HepG2 (cell line): ENCODE measurements at regions of chr17 and their contacts with region 1.

Region 1: DNA sequence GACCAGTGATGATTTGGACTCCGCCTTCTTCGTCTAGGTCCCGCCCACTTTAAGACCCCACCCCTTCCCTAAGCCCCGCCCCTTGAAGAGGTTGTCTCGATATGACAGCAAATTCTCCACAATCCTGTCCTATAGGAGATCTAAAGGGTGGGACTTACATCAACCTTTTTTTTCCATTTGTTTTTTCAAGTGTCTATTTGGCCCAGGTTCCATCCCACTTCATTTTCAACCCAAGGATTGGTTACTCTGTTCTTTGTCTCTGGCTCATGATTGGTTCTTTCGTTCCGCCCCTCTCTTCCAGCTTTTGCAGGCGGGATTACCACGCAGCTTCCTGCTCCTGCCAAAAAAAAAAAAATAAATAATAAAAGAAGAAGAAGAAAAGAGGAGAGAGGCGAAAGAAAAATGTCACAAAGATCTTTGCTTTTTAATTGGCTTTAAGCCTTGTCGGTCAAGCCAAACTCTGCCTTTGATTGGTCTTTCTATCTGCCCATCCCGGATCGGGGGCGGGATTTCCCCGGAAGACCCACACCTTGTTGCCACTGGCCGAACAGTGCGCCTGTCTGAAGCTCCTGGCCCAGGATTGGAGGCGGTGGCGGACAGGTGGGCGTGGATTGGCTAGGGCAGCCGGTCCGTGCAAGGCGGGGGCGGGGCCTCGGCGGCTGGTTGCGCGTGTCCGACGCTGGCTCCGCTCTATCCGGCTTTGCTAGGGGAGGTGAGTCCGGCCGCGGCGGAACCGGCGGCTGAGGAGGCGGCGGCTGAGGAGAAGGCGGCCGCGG is 1.2 kb upstream of the NLK start:
- DNase-seq: peak; percentile 99
- ATAC-seq: peak; percentile 98
- H3K4me3 ChIP-seq: peak overlapping the region; percentile 88 to 89 (median 89)
- H3K27ac ChIP-seq: peak overlapping the region; percentile 51
- H3K4me1 ChIP-seq: peaks cover 50% of the 10 kb centered on the region
- H3K27me3 ChIP-seq: no peaks in the 10 kb centered on the region
- CTCF ChIP-seq: no peak
- EP300 ChIP-seq: no peak
- POLR2A ChIP-seq: peak; percentile 40 to 79; a peak in 3 of 4 replicates
- RAD21 ChIP-seq: no peak

Region 2: GRCh38 chr17:27944546-27945332 is 96.5 kb before region 1 on chr17:
- CTCF ChIA-PET with region 1: no interaction called
- POLR2A ChIA-PET with region 1: no interaction called
- in situ Hi-C with region 1: no loop called
- intact Hi-C with region 1: no loop called
- DNase-seq: no peak
- ATAC-seq: no peak
- H3K4me3 ChIP-seq: no peak overlapping the region
- H3K27ac ChIP-seq: no peak overlapping the region
- H3K4me1 ChIP-seq: no peaks in the 10 kb centered on the region
- H3K27me3 ChIP-seq: no peaks in the 10 kb centered on the region; a peak in 2 of 5 replicates
- CTCF ChIP-seq: no peak
- EP300 ChIP-seq: no peak
- POLR2A ChIP-seq: no peak
- RAD21 ChIP-seq: no peak

Region 3: DNA sequence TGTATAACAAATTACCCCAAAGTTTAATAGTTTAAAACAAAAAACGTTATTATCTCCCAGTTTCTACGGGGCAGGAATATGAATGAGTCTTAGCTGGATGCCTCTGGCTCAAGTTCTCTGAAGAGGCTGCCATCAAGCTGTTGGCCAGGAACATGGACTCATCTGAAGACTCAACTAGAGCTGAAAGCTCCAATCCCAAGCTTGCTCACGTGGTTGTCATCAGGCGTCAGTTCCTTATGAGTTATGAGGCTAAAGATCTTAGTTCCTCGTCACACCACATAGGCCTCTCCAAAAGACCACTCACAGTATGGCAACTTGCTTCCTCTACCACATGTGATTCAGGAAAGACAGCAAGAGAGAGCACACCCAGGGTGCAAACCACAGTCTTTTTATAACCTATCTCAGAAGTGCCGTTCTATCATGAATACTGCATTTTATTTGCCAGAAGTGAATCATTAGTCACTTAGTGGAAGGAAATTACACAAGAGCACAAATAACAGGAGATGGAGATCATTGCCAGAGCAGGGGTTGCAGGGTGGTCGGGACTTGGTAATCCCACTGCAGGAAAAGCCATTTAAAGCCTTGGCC is 47.4 kb before region 1 on chr17:
- CTCF ChIA-PET with region 1: no interaction called
- POLR2A ChIA-PET with region 1: no interaction called
- in situ Hi-C with region 1: no loop called
- intact Hi-C with region 1: no loop called
- DNase-seq: no peak
- ATAC-seq: no peak
- H3K4me3 ChIP-seq: no peak overlapping the region
- H3K27ac ChIP-seq: no peak overlapping the region
- H3K4me1 ChIP-seq: no peaks in the 10 kb centered on the region
- H3K27me3 ChIP-seq: no peaks in the 10 kb centered on the region
- CTCF ChIP-seq: no peak
- EP300 ChIP-seq: no peak
- POLR2A ChIP-seq: no peak
- RAD21 ChIP-seq: no peak

Region 4: DNA sequence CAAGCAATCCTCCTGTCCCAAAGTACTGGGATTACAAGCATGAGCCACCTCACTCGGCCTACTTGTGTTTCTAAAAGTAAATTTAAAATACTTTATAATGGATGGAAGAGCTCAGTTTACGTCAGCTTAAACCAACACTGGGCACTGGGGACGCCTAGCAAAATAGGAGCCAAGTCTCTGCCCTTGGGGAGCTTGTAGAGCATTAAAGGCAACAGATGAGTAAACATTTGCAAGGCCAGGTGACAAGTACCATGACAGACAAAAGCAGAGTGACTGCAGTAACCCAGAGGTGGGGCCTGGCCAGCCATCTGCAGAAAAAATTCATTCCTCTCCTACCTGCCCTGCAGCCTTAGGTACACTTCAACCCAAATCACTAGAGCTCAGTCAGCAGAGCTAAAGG is 10.9 kb before region 1 on chr17:
- CTCF ChIA-PET with region 1: no interaction called
- POLR2A ChIA-PET with region 1: interaction called, 10 read pairs
- in situ Hi-C with region 1: no loop called
- intact Hi-C with region 1: no loop called
- DNase-seq: peak; percentile 22
- ATAC-seq: peak; percentile 75
- H3K4me3 ChIP-seq: no peak overlapping the region
- H3K27ac ChIP-seq: no peak overlapping the region
- H3K4me1 ChIP-seq: 0 out of 2 replicates have a peak, but pooled peaks cover 5% of the 10 kb centered on the region
- H3K27me3 ChIP-seq: no peaks in the 10 kb centered on the region
- CTCF ChIP-seq: no peak
- EP300 ChIP-seq: no peak
- POLR2A ChIP-seq: no peak
- RAD21 ChIP-seq: no peak

Region 5: DNA sequence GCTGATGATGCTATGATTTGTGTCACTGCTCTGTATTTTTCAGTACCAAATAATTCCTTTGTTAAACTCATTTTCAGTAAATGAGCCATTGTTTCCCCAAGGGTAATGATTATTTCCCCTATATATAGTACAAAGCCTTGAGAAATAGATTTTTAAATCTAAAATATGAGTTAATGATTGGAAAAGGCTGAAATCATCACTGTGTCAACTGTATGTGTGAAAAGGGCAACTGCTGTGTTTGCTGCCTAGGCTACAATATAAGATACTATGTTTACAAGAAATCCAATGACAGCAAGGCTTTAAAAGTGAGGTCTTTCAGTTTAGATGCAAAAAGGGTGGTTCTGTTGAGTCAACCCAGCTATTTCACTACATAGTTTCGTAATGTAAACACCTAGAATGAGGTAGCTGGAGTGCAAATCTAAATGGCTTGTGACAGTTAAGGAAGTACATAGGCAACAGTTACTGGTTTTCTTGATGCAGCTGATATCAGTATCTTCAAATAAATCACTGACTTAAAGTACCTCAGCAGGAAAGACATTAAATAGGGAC is 16.5 kb after region 1 on chr17:
- CTCF ChIA-PET with region 1: no interaction called
- POLR2A ChIA-PET with region 1: interaction called, 35 read pairs
- in situ Hi-C with region 1: no loop called
- intact Hi-C with region 1: no loop called
- DNase-seq: peak; percentile 49
- ATAC-seq: peak; percentile 59
- H3K4me3 ChIP-seq: no peak overlapping the region
- H3K27ac ChIP-seq: no peak overlapping the region
- H3K4me1 ChIP-seq: peaks cover 44% of the 10 kb centered on the region
- H3K27me3 ChIP-seq: no peaks in the 10 kb centered on the region
- CTCF ChIP-seq: no peak
- EP300 ChIP-seq: no peak
- POLR2A ChIP-seq: no peak
- RAD21 ChIP-seq: no peak

Region 6: GRCh38 chr17:28086519-28086918 is 45.3 kb after region 1 on chr17:
- CTCF ChIA-PET with region 1: no interaction called
- POLR2A ChIA-PET with region 1: no interaction called
- in situ Hi-C with region 1: no loop called
- intact Hi-C with region 1: no loop called
- DNase-seq: no peak
- ATAC-seq: no peak
- H3K4me3 ChIP-seq: no peak overlapping the region
- H3K27ac ChIP-seq: no peak overlapping the region
- H3K4me1 ChIP-seq: peaks cover 20% of the 10 kb centered on the region
- H3K27me3 ChIP-seq: no peaks in the 10 kb centered on the region
- CTCF ChIP-seq: no peak
- EP300 ChIP-seq: no peak
- POLR2A ChIP-seq: no peak
- RAD21 ChIP-seq: no peak

Region 7: GRCh38 chr17:28105501-28105900 is 64.2 kb after region 1 on chr17:
- CTCF ChIA-PET with region 1: no interaction called
- POLR2A ChIA-PET with region 1: no interaction called
- in situ Hi-C with region 1: no loop called
- intact Hi-C with region 1: no loop called
- DNase-seq: no peak
- ATAC-seq: no peak
- H3K4me3 ChIP-seq: no peak overlapping the region
- H3K27ac ChIP-seq: no peak overlapping the region
- H3K4me1 ChIP-seq: peaks cover 14% of the 10 kb centered on the region
- H3K27me3 ChIP-seq: no peaks in the 10 kb centered on the region
- CTCF ChIP-seq: no peak
- EP300 ChIP-seq: no peak
- POLR2A ChIP-seq: no peak
- RAD21 ChIP-seq: no peak

Region 8: DNA sequence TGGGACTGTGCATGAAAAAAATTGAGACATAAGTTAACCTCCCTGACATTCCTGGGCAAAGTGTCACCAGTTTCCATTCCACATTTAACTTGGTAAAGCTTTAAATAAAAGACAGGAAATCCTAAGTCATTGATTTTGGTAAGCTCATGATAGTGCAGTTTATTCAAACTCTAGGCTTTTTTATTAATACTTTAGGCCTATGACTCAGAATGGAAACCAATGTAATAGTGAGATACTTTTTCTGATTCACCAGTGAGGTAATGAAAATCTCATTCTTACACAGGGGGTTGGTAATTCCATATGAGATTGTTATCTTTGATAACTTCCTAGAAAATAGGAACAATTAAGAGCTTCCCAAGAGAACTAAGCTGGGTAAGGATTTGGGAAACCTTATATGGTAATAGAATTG is 92.3 kb after region 1 on chr17:
- CTCF ChIA-PET with region 1: no interaction called
- POLR2A ChIA-PET with region 1: no interaction called
- in situ Hi-C with region 1: loop called (anchors 25 kb)
- intact Hi-C with region 1: no loop called
- DNase-seq: no peak
- ATAC-seq: no peak
- H3K4me3 ChIP-seq: no peak overlapping the region
- H3K27ac ChIP-seq: no peak overlapping the region
- H3K4me1 ChIP-seq: no peaks in the 10 kb centered on the region
- H3K27me3 ChIP-seq: no peaks in the 10 kb centered on the region; a peak in 1 of 5 replicates
- CTCF ChIP-seq: no peak
- EP300 ChIP-seq: no peak
- POLR2A ChIP-seq: no peak
- RAD21 ChIP-seq: no peak

Region 9: DNA sequence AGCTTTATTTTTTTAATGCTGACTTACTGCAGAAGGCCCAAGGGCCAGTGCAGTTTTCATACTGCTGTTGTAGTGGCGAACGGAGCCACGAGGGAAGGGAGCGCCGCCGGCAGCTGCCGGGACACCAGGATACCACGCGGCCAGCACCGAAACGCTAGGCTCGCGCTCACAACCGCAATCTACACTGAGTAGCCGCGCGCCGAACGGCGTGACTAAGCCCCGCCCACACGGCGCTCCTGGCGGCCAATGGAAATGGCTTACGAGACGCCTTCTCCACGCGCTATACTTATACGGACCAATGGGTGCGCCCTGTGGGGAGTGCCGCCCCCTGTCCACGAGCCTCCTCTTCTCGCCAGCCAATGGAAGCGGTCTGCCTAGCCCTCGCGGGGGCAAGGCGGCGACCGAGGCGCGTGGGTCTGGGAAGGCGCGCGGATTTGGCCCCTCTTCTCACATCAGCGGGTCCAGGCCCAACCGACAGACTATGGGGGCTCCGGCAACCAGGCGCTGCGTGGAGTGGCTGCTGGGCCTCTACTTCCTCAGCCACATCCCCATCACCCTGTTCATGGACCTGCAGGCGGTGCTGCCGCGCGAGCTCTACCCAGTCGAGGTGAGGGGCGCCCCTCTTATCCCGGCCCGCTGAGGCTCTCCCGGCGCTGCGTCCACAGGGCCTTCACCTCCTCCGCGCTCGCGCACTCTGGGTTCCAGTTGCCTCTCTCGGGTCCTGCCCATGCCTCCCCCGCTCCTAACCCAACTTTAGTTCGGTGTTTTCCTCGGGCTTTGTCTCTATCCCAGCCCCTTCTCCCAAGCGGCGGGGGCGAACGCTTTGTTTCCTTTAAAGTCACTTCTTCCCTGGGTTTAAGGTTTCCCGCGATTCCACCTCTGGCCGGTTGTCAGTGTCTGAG is 277.8 kb after region 1 on chr17 and contains the start of gene TMEM97:
- CTCF ChIA-PET with region 1: no interaction called
- POLR2A ChIA-PET with region 1: no interaction called
- in situ Hi-C with region 1: loop called (anchors 25 kb)
- intact Hi-C with region 1: no loop called
- DNase-seq: peak; percentile 95
- ATAC-seq: peak; percentile 97
- H3K4me3 ChIP-seq: peak within 1 kb of the TSS; percentile 65 to 80 (median 76)
- H3K27ac ChIP-seq: peak within 1 kb of the TSS; percentile 69
- H3K4me1 ChIP-seq: peaks cover 62% of the 10 kb centered on the region
- H3K27me3 ChIP-seq: no peaks in the 10 kb centered on the region
- CTCF ChIP-seq: peak; percentile 51
- EP300 ChIP-seq: no peak
- POLR2A ChIP-seq: peak; percentile 80 to 88
- RAD21 ChIP-seq: peak; percentile 40; the same call in 1 of the 2 replicates
- total RNA-seq, gene TMEM97: 111 and 137 TPM in 2 replicates